Ovary (tissue), 10 donors: ENCODE measurements at regions of chr13 and their contacts with region 1.

Region 1: DNA sequence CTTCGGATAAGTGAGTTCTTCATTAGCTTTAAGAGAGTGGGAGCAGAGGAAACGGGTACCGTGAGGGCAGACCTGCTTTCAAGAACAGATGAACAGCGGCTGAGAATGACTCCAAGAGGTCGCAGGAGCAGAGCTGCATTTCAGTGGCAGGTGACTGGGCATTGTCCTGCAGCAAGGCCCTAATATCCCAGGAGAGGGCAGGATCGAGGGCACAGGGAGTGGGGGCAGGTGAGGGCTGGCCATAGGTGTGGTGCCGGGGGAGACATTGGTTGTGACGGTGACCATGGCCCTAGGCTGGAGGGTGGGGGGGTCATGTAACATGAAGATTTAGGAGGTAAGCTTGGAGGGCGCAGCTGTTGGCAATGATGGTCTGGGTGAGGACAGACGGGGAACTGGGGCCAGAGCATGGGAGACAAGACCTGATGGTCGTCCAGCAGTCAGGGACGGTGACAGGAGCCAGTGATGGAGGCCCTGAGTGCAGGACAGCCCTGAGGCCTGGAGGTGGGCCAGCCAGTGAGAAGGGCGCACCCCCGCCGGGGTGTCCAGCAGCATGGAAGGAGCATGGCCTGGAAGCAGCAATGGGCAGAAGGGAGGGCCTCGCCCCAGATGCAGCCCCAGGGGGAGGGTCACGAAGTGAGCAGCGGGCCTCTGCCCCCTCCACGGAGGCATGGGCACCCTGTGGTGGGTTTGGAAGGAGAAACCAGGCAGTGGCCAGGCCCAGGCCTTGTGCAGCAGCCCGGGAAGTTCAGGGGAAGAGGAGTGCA is 29.2 kb upstream of the LAMP1 start:
- DNase-seq: no peak
- H3K4me3 ChIP-seq: no peak overlapping the region
- H3K27ac ChIP-seq: no peak overlapping the region
- H3K4me1 ChIP-seq: no peaks in the 10 kb centered on the region
- H3K27me3 ChIP-seq: no peaks in the 10 kb centered on the region
- CTCF ChIP-seq: no peak
- EP300 ChIP-seq: no peak
- POLR2A ChIP-seq: no peak

Region 2: DNA sequence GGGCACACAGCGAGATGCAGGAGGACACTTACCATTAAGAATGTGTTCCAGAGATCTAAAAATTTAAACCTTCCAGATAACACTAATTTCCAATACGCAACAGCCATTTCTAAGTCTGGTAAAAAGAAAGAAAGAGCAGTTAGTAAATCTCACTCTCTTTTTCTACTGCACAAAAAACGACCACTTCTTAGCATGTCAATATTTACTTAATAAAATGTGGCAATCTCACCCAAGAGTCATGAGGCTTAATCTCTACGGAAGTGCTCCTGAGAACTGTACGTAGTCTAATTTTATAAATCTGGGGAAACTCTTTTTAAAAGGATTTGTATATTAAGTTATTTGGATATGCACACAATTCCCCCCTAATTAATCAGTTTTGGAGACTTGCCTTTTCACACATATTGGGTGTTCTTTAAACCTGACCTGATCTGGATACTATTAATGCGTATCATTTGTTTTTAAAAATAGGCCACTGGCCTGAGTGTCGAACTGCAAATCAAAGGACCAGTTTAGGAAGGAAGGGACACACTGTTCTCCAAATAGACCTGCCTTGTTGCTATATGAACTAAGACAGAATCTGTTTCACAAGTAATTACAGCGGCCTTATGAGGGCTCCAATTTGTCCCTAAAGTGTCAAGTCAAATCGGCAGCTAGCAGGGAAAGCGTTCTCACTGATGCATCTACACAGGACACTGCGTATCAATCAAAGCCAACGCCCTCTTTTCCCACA is 193.4 kb after region 1 on chr13:
- intact Hi-C with region 1: loop called in 1 of 4 experiments (anchors 5 kb)
- DNase-seq: no peak
- H3K4me3 ChIP-seq: no peak overlapping the region
- H3K27ac ChIP-seq: no peak overlapping the region
- H3K4me1 ChIP-seq: peaks cover 1% of the 10 kb centered on the region
- H3K27me3 ChIP-seq: no peaks in the 10 kb centered on the region
- CTCF ChIP-seq: no peak
- EP300 ChIP-seq: no peak
- POLR2A ChIP-seq: no peak